MCF 10A (cell line): ENCODE measurements at regions of chr12 and their contacts with region 1.

Region 1: DNA sequence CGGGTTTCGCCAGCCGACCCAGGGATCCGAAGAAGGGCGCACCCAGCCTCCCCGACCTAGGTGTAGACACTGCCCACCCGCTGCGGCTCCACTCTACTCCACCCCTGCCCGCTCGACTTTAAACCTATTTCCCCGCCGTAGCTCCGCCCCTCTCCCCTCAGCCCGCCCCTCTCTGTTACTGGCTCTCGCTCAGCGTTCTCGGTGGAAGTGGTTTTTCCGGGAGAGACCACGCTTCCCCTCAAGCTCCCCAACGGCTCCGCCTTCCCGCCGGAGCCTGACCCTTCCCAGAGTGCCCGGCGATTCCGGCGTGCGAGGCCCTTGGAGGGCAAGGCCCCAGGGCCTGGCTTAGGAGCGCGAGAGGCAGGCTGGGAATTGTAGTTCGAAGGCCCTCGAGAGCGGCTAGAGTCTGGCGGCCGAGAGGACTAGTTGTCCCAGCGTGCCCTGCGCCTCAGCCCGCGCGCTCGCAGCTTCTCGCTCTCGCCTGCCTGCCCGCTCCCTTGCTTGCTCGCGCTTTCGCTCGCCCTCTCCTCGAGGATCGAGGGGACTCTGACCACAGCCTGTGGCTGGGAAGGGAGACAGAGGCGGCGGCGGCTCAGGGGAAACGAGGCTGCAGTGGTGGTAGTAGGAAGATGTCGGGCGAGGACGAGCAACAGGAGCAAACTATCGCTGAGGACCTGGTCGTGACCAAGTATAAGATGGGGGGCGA is at the start of gene PA2G4:
- DNase-seq: peak; percentile 99
- H3K4me3 Mint-ChIP-seq: peak within 1 kb of the TSS; percentile 97
- H3K27ac Mint-ChIP-seq: peak within 1 kb of the TSS; percentile 95
- H3K4me1 Mint-ChIP-seq: peaks cover 9% of the 10 kb centered on the region
- H3K27me3 Mint-ChIP-seq: no peaks in the 10 kb centered on the region
- CTCF ChIP-seq: no peak
- total RNA-seq, gene PA2G4: 158 and 205 TPM in 2 replicates

Region 2: DNA sequence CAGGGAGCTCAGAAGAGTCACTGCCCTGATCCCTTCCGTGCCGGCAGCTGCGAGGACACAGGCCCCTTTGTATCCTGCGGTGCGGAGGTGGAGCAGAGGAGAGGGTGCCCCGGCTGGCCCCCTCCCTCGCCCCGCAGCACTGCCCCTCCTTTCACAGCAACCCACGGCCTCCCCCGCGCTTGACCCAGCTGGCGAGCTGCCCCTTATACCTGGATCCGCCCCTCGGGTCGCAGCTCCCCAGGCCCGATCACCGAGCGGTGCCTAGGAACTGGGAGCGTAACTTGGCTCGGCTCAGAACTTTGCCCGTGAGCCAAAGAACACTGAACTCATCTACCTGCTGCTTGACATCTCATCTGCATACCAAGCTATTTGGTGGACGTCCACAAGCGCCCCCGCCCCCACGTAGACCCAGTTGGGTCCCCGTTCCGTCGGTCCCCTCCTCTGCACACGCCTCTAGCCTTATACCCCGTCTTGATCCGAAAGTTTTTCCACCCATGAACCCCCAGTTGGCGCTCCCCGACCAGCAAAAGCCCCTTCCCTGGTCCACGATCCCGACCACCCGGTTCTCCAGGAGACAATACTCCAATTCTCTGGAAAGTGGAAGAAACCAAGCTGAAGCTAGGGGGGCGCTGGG is 274.2 kb before region 1 on chr12:
- CTCF ChIA-PET with region 1: no interaction called
- POLR2A ChIA-PET with region 1: interaction called, 10 read pairs
- intact Hi-C with region 1: no loop called
- DNase-seq: peak; percentile 13
- H3K4me3 Mint-ChIP-seq: peak overlapping the region; percentile 97
- H3K27ac Mint-ChIP-seq: peak overlapping the region; percentile 92
- H3K4me1 Mint-ChIP-seq: peaks cover 28% of the 10 kb centered on the region
- H3K27me3 Mint-ChIP-seq: no peaks in the 10 kb centered on the region
- CTCF ChIP-seq: no peak

Region 3: DNA sequence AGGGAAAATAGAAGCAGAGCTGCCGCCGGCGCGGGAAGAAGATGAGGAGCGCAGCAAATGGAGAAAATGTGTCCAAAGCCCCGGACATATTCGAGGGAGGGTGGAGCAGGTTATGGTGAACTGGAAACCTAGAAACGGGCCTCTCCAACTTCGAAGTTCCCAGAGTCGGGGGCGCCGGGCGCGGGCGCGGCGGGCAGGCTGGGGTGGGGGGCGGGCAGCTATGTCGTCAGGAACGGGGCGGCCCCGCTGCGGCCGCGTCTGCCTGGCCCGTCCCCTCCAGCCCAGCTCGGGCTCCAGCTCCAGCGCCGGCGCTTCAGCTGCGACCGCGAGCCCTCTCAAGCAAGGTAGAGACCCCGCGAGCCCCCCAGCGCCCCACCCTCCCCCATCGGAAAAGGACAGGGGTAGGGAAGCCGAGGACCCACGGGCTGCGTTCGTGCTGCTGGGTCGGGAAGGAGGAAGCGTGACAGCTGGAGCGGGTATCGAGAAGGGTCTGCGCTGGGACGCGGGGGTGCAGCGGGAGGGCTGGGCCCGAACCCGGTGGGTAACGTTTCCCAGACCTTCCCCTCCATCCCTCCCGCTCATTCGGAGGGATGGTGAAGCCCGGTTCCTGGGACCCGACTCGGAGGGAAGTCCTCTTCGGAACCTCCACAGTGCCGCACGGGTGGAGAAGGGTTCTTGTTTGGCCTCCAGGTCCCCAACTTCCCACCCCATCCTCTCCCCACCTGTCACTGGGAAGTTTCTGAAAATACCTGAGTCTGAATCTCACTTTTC is 172.3 kb before region 1 on chr12:
- CTCF ChIA-PET with region 1: no interaction called
- POLR2A ChIA-PET with region 1: interaction called, 13 read pairs
- intact Hi-C with region 1: no loop called
- DNase-seq: no peak
- H3K4me3 Mint-ChIP-seq: peak overlapping the region; percentile 79
- H3K27ac Mint-ChIP-seq: peak overlapping the region; percentile 89
- H3K4me1 Mint-ChIP-seq: peaks cover 47% of the 10 kb centered on the region
- H3K27me3 Mint-ChIP-seq: no peaks in the 10 kb centered on the region
- CTCF ChIP-seq: no peak

Region 4: DNA sequence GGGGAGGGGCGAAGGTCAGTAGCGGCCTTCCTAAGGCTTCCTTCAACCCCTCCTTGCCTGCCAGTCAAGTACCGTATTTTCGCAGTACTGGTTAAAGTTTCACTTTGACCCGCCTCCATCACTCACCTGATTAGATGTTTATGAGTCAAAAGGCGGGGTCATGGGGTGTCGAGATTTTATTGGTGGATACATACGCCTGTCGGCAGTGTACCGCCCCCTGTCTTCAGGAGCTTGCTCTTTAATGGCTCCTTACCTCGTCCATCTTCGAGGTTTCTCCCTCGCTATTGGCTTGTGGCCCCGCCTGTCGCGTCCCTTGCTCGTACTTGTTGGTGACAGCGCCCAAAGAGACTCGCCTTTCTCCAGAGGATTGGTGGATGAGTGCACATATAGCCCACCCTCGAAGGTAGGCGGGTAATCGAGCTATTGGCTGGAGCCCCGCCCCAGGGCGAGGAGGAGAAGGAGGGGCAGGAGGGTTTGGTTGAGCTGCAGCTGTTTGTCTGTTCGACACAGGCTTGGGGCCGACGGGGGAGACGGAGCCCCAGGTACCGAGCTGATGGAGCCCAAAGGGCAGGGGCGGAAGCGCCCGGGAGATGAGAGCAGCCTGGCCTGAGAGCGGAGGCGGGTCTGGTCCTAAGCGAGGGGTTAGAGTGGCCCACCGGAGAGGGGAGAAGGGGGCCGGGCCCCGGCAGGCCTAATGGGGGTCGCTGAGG is 130.5 kb before region 1 on chr12 and contains the start of gene RAB5B:
- CTCF ChIA-PET with region 1: interaction called, 3 read pairs
- POLR2A ChIA-PET with region 1: interaction called, 15 read pairs
- intact Hi-C with region 1: no loop called
- DNase-seq: peak; percentile 100
- H3K4me3 Mint-ChIP-seq: no peak within 1 kb of the TSS
- H3K27ac Mint-ChIP-seq: no peak within 1 kb of the TSS
- H3K4me1 Mint-ChIP-seq: peaks cover 25% of the 10 kb centered on the region
- H3K27me3 Mint-ChIP-seq: no peaks in the 10 kb centered on the region
- CTCF ChIP-seq: no peak
- total RNA-seq, gene RAB5B: 67.4 and 96.1 TPM in 2 replicates

Region 5: DNA sequence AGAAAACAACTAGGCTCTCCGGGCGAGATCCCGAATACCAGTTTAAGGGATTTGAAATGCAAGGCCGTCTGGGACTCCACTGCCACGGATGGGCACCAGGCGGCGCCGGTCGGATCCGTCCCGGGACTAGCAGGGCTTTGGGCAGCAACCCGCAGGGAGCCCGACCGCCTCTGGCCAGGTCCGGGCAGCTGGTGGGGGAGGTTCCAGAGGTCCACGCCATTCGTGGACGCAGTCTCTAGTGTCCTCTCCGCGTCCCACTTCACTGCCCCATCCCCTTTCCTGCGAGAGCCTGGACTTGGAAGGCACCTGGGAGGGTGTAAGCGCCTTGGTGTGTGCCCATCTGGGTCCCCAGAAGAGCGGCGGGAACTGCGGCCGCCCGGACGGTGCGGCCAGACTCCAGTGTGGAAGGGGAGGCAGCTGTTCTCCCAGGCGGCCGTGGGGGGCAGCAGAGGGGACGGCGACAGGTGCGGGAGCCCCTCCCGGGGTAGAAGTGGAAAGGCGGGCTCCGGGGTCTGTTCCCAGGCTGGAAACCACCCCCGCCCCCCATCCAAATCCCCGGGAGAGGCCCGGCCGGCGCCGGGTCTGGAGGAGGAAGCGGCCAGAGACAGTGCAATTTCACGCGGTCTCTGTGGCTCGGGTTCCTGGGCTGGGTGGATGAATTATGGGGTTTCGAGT is 25.1 kb before region 1 on chr12:
- CTCF ChIA-PET with region 1: interaction called, 11 read pairs
- POLR2A ChIA-PET with region 1: interaction called, 66 read pairs
- intact Hi-C with region 1: loop called (anchors 1 kb)
- DNase-seq: peak; percentile 85
- H3K4me3 Mint-ChIP-seq: peak overlapping the region; percentile 87
- H3K27ac Mint-ChIP-seq: no peak overlapping the region
- H3K4me1 Mint-ChIP-seq: no peaks in the 10 kb centered on the region
- H3K27me3 Mint-ChIP-seq: no peaks in the 10 kb centered on the region
- CTCF ChIP-seq: peak; percentile 60

Region 6: DNA sequence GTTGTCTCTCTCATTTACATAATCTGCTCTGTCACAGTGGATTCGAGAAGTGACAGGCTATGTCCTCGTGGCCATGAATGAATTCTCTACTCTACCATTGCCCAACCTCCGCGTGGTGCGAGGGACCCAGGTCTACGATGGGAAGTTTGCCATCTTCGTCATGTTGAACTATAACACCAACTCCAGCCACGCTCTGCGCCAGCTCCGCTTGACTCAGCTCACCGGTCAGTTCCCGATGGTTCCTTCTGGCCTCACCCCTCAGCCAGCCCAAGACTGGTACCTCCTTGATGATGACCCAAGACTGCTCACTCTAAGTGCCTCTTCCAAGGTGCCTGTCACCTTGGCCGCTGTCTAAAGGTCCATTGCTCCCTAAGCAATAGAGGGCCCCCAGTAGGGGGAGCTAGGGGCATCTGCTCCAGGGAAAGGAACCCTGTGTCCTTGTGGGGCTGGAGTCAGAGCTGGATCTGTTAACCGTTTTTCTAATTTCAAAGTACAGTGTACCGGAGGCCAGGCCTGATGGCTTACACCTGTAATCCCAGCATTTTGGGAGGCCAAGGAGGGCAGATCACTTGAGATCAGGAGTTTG is 19.2 kb before region 1 on chr12:
- CTCF ChIA-PET with region 1: interaction called, 4 read pairs
- POLR2A ChIA-PET with region 1: interaction called, 66 read pairs
- intact Hi-C with region 1: no loop called
- DNase-seq: peak; percentile 45
- H3K4me3 Mint-ChIP-seq: no peak overlapping the region
- H3K27ac Mint-ChIP-seq: no peak overlapping the region
- H3K4me1 Mint-ChIP-seq: no peaks in the 10 kb centered on the region
- H3K27me3 Mint-ChIP-seq: no peaks in the 10 kb centered on the region
- CTCF ChIP-seq: peak; percentile 27

Region 7: GRCh38 chr12:56127888-56128669 is 23.8 kb after region 1 on chr12 and contains the start of gene ESYT1:
- CTCF ChIA-PET with region 1: no interaction called
- POLR2A ChIA-PET with region 1: interaction called, 42 read pairs
- intact Hi-C with region 1: no loop called
- DNase-seq: peak; percentile 100
- H3K4me3 Mint-ChIP-seq: peak within 1 kb of the TSS; percentile 84
- H3K27ac Mint-ChIP-seq: peak within 1 kb of the TSS; percentile 84
- H3K4me1 Mint-ChIP-seq: peaks cover 26% of the 10 kb centered on the region
- H3K27me3 Mint-ChIP-seq: no peaks in the 10 kb centered on the region
- CTCF ChIP-seq: no peak
- total RNA-seq, gene ESYT1: 111 and 123 TPM in 2 replicates